ENCODE measurements at regions of chr19 and their contacts with region 1.

Region 1: DNA sequence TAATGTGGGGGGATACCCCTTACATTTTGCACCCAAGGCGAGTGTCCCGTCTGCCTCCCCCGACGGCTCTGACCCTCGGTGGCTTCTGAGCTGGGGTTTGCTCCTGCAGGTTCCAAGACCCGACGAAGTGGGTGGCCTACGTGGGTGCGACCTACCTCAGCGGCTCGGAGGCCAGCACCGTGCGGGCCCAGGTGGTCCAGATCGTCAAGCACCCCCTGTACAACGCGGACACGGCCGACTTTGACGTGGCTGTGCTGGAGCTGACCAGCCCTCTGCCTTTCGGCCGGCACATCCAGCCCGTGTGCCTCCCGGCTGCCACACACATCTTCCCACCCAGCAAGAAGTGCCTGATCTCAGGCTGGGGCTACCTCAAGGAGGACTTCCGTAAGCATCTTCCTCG is 19.1 kb downstream of the TIMM13 start:
- DNase-seq: no peak
- H3K4me3 ChIP-seq: no peak overlapping the region
- CTCF ChIP-seq: no peak
- POLR2A ChIP-seq: no peak

Region 2: DNA sequence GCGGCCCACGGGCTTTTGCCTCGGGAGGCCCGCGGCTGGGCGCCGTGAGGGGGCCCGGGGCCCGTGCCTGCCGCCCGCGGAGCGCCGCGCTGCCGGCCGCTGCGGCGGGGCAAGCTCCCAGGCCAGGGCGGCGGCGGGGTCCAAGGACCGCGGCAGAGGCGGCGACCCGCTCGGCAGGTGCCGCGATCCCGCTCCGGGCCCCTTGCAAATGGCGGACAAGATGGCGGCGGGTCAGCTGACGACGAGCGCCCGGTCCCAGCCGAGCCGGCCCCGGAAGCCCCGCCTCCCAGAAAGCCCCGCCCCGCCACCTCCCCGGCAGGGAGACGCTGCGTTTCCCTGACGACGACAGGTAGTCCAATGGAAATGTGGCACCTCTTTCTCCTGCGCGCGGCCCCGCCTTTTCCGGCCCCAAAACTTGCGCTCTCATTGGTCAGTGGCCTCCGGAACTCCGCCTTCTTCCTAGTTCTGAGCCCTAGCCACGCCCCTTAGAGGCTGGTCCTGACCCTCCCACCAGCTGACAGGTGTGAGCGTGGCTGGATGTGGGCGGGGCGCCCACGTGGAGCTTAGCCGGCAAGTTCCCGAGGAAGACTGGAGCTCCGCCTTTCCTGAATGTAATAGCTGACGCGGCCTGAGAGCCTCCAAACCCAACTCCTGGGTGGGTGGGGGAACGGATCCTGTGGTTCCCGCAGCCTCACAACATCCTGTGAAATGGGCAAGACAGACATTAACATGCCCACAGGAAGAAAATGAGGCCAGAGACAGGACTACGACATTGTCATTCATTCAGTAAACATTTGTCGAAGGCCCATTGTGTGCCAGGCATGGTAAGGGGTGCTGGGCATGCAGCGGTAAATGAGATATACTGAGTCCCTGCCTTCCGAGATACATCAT is 256.7 kb before region 1 on chr19 and contains the start of gene AP3D1:
- intact Hi-C with region 1: loop called (anchors 10 kb)
- DNase-seq: peak; percentile 100
- H3K4me3 ChIP-seq: peak within 1 kb of the TSS; percentile 93
- CTCF ChIP-seq: no peak
- POLR2A ChIP-seq: no peak
- total RNA-seq, gene AP3D1: 46.5 to 84.7 (median 71.8) TPM

Region 3: DNA sequence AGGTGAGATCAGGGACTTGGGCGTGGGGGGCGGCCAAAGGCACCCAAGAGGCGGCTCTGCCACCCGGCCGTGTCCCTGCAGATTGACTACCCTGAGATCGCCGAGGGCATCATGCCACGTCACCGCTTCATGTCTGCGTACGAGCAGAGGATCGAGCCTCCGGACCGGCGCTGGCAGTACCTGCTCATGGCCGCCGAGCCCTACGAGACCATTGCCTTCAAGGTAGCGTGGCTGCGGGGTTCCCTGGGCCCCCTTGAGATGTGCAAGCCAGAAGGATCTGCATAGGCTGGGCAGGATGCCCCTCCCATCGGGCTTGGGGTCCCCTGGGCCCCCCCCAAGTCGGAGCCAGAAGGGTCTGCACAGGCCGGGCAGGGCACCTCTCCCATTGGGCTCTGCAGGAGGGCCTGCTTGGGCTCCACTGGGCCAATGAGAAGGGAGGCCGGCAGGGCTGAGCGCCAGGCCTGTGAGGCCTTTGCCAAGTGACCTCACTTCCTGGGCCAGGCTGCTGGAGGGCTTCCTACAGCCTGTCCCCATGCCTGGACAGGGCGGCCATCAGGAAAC is 161.4 kb before region 1 on chr19:
- intact Hi-C with region 1: no loop called
- DNase-seq: no peak
- H3K4me3 ChIP-seq: no peak overlapping the region
- CTCF ChIP-seq: no peak
- POLR2A ChIP-seq: no peak

Measured in lower leg skin (tissue), 4 donors.